ENCODE measurements at regions of chr20 and their contacts with region 1.

Region 1: DNA sequence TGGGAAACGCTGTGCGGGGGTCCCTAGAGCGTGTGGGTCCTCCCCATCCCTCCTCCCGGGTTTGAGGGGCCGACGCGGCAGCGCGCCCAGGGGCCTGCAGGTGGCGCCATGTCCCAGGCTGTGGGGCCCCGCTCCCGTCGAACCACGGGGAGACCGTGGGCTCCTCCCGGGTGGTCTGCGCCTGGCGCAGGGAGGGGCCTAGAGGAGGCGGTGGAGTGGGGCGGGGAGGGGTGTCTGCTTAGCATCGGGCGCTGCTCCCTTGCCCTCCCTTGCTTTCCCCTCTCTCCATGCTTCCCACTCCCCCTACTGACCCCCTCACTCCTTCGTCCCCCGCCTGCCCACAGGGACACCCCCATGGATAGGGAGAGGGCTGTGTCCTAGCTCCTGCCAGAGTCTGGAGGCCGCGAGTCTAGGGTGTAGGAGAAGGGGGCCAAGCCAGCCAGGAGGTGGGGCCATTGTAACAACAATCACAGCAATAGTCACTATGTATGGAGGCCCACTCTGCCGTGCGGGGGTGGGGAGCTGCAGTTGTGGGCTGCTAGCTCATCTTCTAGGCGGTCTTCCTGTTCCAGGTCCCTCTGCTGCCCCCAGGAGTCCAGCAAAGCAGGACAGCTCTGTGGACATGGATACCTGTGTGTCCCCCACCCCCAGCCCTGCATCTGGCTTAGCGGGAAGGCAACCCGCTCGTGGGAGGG is 51.7 kb downstream of the CHMP4B start:
- DNase-seq: peak; percentile 75
- H3K4me3 ChIP-seq: peak overlapping the region; percentile 5 to 37
- H3K27ac ChIP-seq: no peak overlapping the region
- H3K4me1 ChIP-seq: peaks cover 11% of the 10 kb centered on the region
- H3K27me3 ChIP-seq: no peaks in the 10 kb centered on the region
- CTCF ChIP-seq: peak in 2 of 3 experiments; percentile 71 to 77
- POLR2A ChIP-seq: no peak

Region 2: GRCh38 chr20:34069341-34070078 is 206.7 kb after region 1 on chr20:
- intact Hi-C with region 1: loop called (anchors 10 kb)
- DNase-seq: peak; percentile 85
- H3K4me3 ChIP-seq: no peak overlapping the region
- H3K27ac ChIP-seq: peak overlapping the region; percentile 21 to 29
- H3K4me1 ChIP-seq: peaks cover 17% of the 10 kb centered on the region
- H3K27me3 ChIP-seq: no peaks in the 10 kb centered on the region
- CTCF ChIP-seq: peak; percentile 73 to 94 (median 83)
- POLR2A ChIP-seq: no peak

Measured in testis (tissue), 5 donors.